Posterior cingulate gyrus (tissue), 11 donors: ENCODE measurements at regions of chr6 and their contacts with region 1.

Region 1: DNA sequence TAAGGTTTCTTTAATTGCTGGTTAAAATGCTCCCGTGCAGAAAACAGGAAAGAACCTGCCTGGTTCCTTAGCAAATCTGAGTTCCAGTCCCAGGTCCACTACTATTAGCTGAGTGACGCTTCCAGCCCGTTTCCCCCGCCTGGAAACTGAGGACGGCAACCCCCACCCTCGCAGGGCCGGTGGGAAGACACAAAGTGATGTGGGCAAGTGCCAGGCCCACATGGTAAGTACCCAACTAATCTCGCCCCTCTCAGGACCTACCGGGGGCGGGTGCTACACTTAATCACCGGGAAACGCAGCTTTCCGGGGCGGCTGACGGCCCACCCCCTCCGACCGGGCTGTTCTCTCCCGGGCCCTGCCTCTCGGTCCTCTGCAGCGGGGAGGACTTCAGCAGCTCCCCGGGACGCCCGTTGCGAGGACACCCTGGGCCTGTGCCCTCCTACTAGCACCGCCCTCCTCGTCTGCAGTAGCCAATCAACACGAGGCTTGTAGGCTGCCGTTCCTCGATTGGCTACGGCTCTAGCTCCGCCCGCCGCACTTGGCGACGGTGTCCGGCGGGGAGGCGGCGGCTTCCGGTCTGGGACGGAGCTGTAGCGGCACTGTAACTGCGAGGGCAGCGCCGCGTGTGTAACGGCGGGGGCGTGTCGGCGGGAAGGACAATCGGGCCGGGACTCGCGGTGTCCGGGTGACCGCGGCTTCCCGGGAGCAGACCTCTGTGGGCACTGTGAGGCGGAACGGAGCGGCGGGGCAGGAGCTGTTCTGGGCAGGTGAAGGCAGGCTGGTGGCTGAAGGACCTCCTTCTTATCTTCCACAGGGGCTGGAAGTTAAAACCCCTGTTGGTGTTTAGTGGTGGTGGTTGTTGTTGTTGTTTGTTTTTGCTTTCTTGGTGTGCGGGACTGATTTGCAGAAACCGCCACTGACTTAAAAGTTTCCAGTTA is at the start of gene ZBTB9:
- DNase-seq: peak; percentile 94 to 100 (median 96)

Region 2: DNA sequence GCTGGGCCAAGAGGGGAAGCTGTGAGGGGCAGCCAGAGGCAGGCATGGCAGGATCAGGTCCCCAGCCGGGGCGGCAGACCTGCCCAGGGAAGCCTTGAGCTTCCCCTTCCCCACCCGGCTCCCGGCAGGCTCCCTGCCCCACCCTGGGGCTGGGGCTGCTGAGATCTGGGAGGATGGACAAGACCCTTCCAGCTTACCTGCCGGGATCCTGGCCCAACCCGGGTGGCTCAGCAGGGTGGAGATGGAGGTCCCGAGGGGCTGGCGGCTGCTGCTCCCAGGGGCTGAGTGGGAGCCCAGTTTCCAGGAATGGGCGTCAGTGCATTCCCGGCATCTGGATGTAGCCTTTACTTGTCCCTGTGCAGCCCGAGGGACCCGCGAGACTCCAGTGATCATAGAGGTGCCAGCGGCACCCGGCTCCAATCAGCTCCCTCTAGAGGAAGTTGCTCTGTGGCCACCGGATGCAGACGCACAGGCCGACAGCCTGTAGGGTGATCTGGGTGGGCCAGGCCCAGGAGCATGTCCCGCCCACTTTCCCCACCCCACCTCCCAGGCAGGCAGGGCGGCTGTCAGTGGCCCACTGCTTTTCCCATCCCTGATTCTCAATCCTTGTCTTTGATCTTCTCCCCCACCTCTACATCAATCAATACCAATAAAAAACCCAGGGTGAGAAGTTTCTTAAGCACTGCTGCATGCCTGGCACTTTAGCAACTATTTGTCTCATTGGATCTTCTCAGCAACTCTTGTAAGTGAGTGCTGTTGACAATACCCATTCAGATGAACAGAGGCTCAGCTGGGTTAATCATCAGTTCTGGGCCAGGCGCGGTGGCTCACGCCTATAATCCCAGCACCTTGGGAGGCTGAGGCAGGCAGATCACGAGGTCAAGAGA is 125.8 kb after region 1 on chr6 and contains the start of gene BAK1:
- intact Hi-C with region 1: loop called (anchors 10 kb)
- DNase-seq: peak; percentile 82 to 99 (median 94)